AG04449 (cell line): ENCODE measurements at regions of chr2 and their contacts with region 1.

Region 1: GRCh38 chr2:54838585-54839035 is 115.1 kb downstream of the EML6 start:
- DNase-seq: no peak
- H3K4me3 ChIP-seq: no peak overlapping the region
- CTCF ChIP-seq: peak; percentile 85

Region 2: GRCh38 chr2:54665436-54665856 is 173.2 kb before region 1 on chr2:
- CTCF ChIA-PET with region 1: interaction called, 12 read pairs
- POLR2A ChIA-PET with region 1: no interaction called
- DNase-seq: no peak
- H3K4me3 ChIP-seq: no peak overlapping the region
- CTCF ChIP-seq: peak; percentile 45

Region 3: GRCh38 chr2:54675738-54676137 is 162.9 kb before region 1 on chr2:
- CTCF ChIA-PET with region 1: no interaction called
- POLR2A ChIA-PET with region 1: no interaction called
- DNase-seq: no peak
- H3K4me3 ChIP-seq: no peak overlapping the region
- CTCF ChIP-seq: no peak

Region 4: DNA sequence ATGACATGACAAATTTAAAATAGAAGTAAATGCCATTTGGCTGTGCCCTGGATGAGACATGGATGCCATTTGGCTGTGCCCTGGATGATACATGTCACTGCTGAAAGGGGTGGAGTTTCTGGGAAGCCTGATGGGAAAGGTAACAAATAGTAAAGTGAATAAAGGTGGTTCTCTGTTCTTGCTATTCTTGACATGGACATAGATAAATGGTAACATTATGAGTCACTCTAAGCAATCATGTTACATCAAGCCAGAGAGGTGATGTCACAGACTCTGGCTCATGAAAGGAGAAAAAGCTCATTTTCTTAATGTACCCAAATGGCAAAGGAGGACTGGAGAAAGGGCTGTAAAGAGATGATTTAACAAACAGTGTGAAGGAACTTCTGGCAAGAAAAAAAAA is 28.8 kb before region 1 on chr2:
- CTCF ChIA-PET with region 1: interaction called, 16 read pairs
- POLR2A ChIA-PET with region 1: no interaction called
- DNase-seq: no peak
- H3K4me3 ChIP-seq: no peak overlapping the region
- CTCF ChIP-seq: no peak

Region 5: GRCh38 chr2:54859997-54860686 is 21.5 kb after region 1 on chr2:
- CTCF ChIA-PET with region 1: interaction called, 19 read pairs
- POLR2A ChIA-PET with region 1: no interaction called
- DNase-seq: peak; percentile 47
- H3K4me3 ChIP-seq: no peak overlapping the region
- CTCF ChIP-seq: no peak

Region 6: DNA sequence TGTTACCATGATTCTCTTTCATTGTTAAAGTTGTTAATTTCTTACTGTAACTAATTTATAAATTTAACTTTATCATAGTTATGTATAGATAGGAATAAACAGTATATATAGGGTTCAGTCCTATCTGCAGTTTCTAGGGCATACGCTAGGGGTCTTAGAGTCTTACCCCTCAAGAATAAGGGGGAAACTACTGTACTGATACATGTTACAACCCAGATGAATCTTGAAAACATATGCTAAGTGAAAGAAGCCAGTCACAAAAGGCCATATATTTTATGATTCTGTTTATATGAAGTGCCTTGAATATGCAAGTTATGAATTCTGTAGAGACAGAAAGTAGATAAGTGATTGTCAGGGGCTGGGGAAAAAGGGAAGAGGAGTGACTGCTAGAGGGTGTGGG is 159.2 kb after region 1 on chr2:
- CTCF ChIA-PET with region 1: no interaction called
- POLR2A ChIA-PET with region 1: no interaction called
- DNase-seq: no peak
- H3K4me3 ChIP-seq: no peak overlapping the region
- CTCF ChIP-seq: no peak

Region 7: DNA sequence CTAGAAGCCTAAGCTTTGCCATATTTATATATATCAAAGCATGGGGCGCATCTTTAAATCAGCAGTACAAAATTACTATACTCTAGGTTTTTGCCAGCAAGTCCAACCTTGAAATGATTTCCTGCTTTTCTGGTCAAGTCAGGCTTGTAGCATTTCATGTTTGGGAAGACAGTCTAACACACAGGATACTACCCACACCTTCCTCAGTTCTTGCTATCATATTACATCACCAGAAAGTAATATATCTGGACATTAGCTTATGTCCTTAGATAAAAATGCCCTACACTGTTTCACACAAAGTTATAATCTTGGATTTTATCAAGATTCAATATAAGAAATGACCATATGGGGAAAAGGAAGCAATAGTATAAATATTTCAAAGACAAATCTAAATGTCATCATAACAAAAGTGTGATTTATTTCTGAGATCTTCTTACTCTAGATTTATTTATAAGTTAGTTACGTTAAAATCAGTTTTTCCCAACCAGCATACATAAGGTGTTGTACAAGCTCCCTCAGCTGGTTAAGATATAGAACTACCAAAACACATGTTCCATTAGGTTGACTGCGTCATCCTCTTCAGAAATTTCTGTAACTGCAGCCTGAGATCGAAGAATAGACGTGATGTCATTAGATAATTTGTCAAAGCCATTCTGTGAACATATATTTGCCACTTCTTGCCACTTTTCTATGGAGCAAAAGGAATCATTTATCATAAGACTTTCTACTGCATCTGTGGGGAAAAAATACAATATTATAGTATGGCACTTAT is 336.8 kb after region 1 on chr2:
- CTCF ChIA-PET with region 1: interaction called, 30 read pairs
- POLR2A ChIA-PET with region 1: no interaction called
- DNase-seq: no peak
- H3K4me3 ChIP-seq: no peak overlapping the region
- CTCF ChIP-seq: peak; percentile 40

Region 8: DNA sequence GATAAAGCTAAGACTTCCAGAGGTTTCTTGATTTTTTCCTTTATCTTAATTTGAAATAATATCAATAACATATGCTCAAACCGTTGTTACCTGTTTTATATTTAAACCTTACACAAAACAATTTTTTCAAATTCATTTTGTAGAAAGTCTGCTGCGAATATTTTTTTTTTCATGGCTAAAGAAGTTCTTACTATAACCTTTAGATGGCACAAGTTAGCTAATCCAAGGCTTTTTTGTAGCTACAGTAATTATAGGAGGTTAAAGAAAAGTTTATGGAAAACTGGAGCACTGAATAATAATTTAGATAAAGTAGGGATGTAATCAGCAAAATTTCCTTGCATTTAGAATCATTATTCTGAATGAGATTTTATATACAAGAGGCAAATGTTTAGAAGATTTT is 933.0 kb after region 1 on chr2:
- CTCF ChIA-PET with region 1: no interaction called
- POLR2A ChIA-PET with region 1: no interaction called
- DNase-seq: no peak
- H3K4me3 ChIP-seq: no peak overlapping the region
- CTCF ChIP-seq: peak; percentile 12